Posterior vena cava (tissue), 2 donors: ENCODE measurements at regions of chr5 and their contacts with region 1.

Region 1: DNA sequence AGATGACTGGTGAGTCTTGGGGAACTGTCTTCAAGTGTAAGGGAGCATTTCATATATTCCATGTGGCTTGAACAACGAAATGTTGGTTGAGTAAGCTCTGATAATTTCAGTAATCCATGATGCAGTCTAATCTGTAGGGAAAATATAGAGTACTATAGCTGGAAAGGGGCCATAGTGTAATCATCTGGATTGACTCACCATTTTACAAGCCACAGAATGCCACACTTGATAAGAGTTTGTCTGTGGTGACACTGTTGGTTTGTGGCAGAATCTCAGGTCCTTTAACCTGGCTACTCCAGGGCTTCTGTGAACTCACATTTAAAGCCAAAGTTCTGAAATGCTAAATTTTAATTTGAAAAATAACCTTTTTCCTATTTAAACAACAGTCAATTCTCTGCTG is 16.3 kb upstream of the MAML1 start:
- DNase-seq: no peak

Region 2: DNA sequence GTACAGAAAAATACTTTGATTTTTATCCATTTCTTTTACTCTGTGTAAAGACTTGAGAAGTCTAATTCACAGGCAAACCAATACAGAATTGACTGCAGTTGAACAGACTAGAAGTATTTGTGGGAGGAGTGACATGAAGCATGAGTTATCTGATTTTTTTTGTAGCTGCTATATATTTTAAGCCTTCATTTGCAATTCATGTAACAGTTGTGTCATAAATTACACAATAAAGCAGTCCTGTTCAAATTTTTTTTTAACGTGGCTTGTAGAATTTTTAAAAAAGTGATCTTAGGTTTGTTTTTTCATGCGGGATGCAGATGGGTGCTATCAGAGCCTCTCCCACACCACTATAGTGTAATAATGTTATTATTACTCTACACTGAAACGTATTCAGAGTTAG is 13.4 kb after region 1 on chr5:
- intact Hi-C with region 1: loop called in 1 of 2 experiments (anchors 2 kb)
- DNase-seq: no peak

Region 3: DNA sequence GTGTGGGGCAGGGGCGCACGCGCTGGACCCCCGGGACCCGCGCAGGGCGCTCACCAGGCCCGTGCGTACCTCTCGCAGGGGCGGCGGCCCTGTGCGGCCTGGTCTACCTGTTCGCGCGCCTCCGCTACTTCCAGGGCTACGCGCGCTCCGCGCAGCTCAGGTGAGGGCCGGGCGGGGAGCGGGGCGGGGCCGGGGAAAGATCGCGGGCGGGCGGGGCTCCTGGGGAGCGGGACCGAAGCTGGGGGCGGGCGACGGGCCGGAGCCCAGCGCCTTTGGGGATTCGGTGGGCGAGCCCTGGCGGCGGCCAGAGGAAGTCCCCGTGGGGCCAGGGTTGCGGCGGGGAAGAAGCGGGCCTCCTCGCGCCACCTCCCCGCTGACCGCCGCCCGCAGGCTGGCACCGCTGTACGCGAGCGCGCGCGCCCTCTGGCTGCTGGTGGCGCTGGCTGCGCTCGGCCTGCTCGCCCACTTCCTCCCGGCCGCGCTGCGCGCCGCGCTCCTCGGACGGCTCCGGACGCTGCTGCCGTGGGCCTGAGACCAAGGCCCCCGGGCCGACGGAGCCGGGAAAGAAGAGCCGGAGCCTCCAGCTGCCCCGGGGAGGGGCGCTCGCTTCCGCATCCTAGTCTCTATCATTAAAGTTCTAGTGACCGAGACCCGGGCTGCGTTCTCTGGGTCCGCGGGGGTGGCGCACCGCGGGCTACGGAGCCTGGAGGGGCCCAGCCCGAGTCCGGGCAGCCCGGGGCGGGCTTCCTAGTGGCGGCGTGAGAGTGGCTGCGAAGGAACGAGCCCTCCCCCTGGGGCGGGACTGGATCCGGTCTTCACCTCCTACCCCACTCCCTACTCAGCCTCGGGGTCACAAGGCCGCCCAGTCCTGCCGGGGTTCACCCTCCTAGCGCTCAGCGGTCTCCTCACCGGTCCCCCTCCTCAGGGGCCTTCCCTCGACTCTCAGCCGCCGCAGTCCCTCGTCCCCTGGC is 79.9 kb after region 1 on chr5:
- intact Hi-C with region 1: no loop called
- DNase-seq: peak; percentile 94